ENCODE measurements at regions of chr2 and their contacts with region 1.

Region 1: GRCh38 chr2:70301344-70302194 is at the start of gene FAM136A:
- DNase-seq: peak; percentile 61 to 98
- H3K4me3 ChIP-seq: peak within 1 kb of the TSS; percentile 63 to 86 (median 75)
- H3K27ac ChIP-seq: peak within 1 kb of the TSS; percentile 87
- H3K4me1 ChIP-seq: peaks cover 0 to 8% (median 5%) of the 10 kb centered on the region in 4 experiments; a peak in 3 of 7 replicates
- H3K27me3 ChIP-seq: no peaks in the 10 kb centered on the region
- CTCF ChIP-seq: peak; percentile 86 to 97 (median 91)
- EP300 ChIP-seq: peak in 1 of 2 experiments; percentile 50; a peak in 1 of 3 replicates
- POLR2A ChIP-seq: peak; percentile 86 to 95
- RAD21 ChIP-seq: peak; percentile 34 to 55; a peak in 3 of 4 replicates
- total RNA-seq, gene FAM136A: 118 and 122 TPM in 2 replicates

Region 2: DNA sequence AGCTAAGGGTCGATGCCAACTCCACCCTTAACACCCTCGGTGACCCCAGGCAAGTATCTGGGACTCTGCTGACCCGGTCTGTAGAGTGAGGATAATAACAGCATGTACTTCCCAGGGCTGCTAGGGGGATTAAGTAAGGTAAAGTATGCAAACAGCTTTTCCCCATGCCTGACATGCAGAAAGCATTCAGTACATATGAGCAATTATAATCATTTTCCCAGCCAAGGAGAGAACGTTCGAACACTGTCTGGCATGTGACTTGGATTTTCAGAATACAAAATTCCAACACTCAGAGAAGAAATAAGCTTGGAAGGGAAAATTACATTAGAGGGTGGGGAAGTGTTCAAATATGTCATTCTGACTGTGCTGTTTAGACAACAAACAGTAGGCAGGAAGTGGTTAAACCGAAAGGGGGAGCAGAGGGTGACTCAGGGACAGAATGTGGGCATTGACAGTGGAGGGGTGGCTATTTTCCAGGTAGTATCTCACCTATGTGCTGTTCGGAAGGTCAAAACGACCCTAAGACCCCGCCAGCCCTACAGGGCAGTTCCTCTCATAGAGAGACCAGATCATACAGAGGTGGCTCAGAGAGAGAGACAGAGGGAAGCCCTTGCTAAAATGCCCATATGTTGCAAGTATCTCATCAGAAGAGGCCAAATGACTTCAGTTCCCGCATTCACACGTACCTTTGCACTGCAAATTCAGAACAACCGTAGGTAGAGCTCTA is 355.1 kb before region 1 on chr2:
- CTCF ChIA-PET with region 1: no interaction called
- POLR2A ChIA-PET with region 1: no interaction called
- DNase-seq: no peak
- H3K4me3 ChIP-seq: no peak overlapping the region
- H3K27ac ChIP-seq: no peak overlapping the region
- H3K4me1 ChIP-seq: peaks cover 0 to 3% (median 0%) of the 10 kb centered on the region in 4 experiments; a peak in 1 of 7 replicates
- H3K27me3 ChIP-seq: no peaks in the 10 kb centered on the region; a peak in 1 of 7 replicates
- CTCF ChIP-seq: no peak
- EP300 ChIP-seq: no peak
- POLR2A ChIP-seq: no peak
- RAD21 ChIP-seq: no peak

Region 3: DNA sequence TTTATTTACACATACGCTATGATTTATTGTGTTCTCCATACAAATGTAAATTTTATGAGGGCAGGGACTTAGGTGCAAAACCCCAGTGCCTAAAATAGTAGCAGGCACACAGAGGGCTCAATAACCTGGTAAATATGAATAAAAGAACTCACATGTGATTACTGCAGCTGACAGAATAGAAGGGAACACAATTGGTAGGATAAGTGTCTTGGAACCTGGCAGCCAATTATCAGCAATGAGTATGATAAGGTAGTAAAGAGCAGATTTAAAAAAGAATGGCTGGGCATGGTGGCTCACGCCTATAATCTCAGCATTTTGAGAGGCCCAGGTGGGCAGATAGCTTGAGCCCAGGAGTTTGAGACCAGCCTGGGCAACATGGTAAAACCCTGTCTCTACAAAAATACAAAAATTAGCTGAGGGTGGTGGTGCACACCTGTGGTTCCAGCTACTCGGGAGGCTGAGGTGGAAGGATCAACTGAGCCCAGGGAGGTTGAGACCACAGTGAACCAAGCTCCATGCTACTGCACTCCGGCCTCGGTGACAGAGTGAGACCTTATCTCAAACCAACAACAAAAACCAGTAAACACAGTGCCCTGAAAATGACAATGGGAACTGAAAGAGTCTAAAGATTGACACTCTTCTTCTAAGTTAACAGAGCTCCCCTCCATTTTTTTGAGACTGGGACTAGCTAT is 17.9 kb before region 1 on chr2:
- CTCF ChIA-PET with region 1: interaction called, 10 read pairs
- POLR2A ChIA-PET with region 1: interaction called, 3 read pairs
- DNase-seq: no peak
- H3K4me3 ChIP-seq: no peak overlapping the region
- H3K27ac ChIP-seq: no peak overlapping the region
- H3K4me1 ChIP-seq: no peaks in the 10 kb centered on the region
- H3K27me3 ChIP-seq: no peaks in the 10 kb centered on the region
- CTCF ChIP-seq: no peak
- EP300 ChIP-seq: no peak
- POLR2A ChIP-seq: no peak
- RAD21 ChIP-seq: no peak

Region 4: DNA sequence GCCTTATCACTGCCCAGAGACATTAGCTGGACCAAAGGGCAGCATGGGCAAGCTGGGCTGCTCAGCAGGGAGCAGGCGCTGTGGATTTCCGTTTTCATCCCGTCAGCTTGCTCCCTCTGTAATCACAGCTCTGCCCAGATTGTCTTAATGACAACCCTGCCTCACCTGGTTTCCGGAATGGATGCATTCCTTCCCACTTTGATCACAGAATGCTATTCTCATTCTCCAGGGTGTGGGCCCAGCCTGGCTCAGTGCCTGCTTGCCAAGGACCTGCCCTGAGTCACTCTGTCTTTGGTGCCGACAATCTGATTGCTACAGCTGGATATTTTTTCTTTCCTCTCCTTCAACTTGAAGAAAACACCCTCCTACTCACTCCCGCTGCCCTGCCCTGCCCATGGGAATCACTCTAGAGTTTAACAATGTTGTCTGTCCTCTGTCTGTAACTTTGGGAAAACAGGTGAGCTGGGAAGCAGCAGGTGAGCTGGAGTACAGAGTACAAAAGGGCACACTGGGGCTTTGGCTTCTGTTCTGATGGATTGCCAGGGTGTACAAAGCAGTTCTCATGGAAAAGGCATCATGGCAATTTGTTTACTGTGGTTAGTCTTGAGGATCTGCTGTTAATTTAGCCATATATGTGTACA is 27.5 kb after region 1 on chr2:
- CTCF ChIA-PET with region 1: interaction called, 50 read pairs
- POLR2A ChIA-PET with region 1: interaction called, 3 read pairs
- DNase-seq: peak in 1 of 2 experiments; percentile 23
- H3K4me3 ChIP-seq: no peak overlapping the region
- H3K27ac ChIP-seq: no peak overlapping the region
- H3K4me1 ChIP-seq: peaks cover 0 to 6% (median 0%) of the 10 kb centered on the region in 4 experiments; a peak in 1 of 7 replicates
- H3K27me3 ChIP-seq: no peaks in the 10 kb centered on the region; a peak in 1 of 7 replicates
- CTCF ChIP-seq: no peak
- EP300 ChIP-seq: no peak
- POLR2A ChIP-seq: no peak
- RAD21 ChIP-seq: no peak

Region 5: GRCh38 chr2:70616168-70616694 is 314.7 kb after region 1 on chr2:
- CTCF ChIA-PET with region 1: interaction called, 31 read pairs
- POLR2A ChIA-PET with region 1: interaction called, 4 read pairs
- DNase-seq: no peak
- H3K4me3 ChIP-seq: no peak overlapping the region
- H3K27ac ChIP-seq: no peak overlapping the region
- H3K4me1 ChIP-seq: peaks cover 1 to 6% (median 2%) of the 10 kb centered on the region in 4 experiments; a peak in 5 of 7 replicates
- H3K27me3 ChIP-seq: no peaks in the 10 kb centered on the region; a peak in 1 of 7 replicates
- CTCF ChIP-seq: no peak
- EP300 ChIP-seq: no peak
- POLR2A ChIP-seq: no peak
- RAD21 ChIP-seq: no peak

Region 6: GRCh38 chr2:70641263-70641784 is 339.8 kb after region 1 on chr2:
- CTCF ChIA-PET with region 1: interaction called, 120 read pairs
- POLR2A ChIA-PET with region 1: interaction called, 5 read pairs
- DNase-seq: no peak
- H3K4me3 ChIP-seq: no peak overlapping the region
- H3K27ac ChIP-seq: no peak overlapping the region
- H3K4me1 ChIP-seq: no peaks in the 10 kb centered on the region
- H3K27me3 ChIP-seq: no peaks in the 10 kb centered on the region; a peak in 2 of 7 replicates
- CTCF ChIP-seq: no peak
- EP300 ChIP-seq: no peak
- POLR2A ChIP-seq: no peak
- RAD21 ChIP-seq: no peak

Measured in H1 (cell line).